CD4-positive, alpha-beta memory T cell (primary cell): ENCODE measurements at regions of chr3 and their contacts with region 1.

Region 1: GRCh38 chr3:185659942-185660921 is 74.1 kb downstream of the SENP2 start:
- DNase-seq: peak; percentile 43 to 56 (median 52)
- H3K4me3 ChIP-seq: no peak overlapping the region
- H3K4me3 Mint-ChIP-seq: peak overlapping the region in 2 of 8 donors; percentile 17 to 22
- H3K27ac ChIP-seq: no peak overlapping the region
- H3K27ac Mint-ChIP-seq: no peak overlapping the region
- H3K4me1 ChIP-seq: no peaks in the 10 kb centered on the region
- H3K4me1 Mint-ChIP-seq: peaks cover 0 to 1% (median 0%) of the 10 kb centered on the region in 4 donors
- H3K27me3 ChIP-seq: no peaks in the 10 kb centered on the region
- H3K27me3 Mint-ChIP-seq: peaks cover 13 to 15% of the 10 kb centered on the region in 2 donors

Region 2: GRCh38 chr3:185646382-185647133 is 13.7 kb before region 1 on chr3:
- CTCF ChIA-PET with region 1: interaction called, 54 read pairs
- POLR2A ChIA-PET with region 1: no interaction called
- intact Hi-C with region 1: no loop called
- DNase-seq: no peak
- H3K4me3 ChIP-seq: no peak overlapping the region
- H3K4me3 Mint-ChIP-seq: no peak overlapping the region
- H3K27ac ChIP-seq: no peak overlapping the region
- H3K27ac Mint-ChIP-seq: peak overlapping the region in 1 of 7 donors; percentile 23
- H3K4me1 ChIP-seq: no peaks in the 10 kb centered on the region
- H3K4me1 Mint-ChIP-seq: peaks cover 0 to 2% (median under 1%) of the 10 kb centered on the region in 4 donors
- H3K27me3 ChIP-seq: no peaks in the 10 kb centered on the region
- H3K27me3 Mint-ChIP-seq: peaks cover 12 to 14% of the 10 kb centered on the region in 2 donors

Region 3: DNA sequence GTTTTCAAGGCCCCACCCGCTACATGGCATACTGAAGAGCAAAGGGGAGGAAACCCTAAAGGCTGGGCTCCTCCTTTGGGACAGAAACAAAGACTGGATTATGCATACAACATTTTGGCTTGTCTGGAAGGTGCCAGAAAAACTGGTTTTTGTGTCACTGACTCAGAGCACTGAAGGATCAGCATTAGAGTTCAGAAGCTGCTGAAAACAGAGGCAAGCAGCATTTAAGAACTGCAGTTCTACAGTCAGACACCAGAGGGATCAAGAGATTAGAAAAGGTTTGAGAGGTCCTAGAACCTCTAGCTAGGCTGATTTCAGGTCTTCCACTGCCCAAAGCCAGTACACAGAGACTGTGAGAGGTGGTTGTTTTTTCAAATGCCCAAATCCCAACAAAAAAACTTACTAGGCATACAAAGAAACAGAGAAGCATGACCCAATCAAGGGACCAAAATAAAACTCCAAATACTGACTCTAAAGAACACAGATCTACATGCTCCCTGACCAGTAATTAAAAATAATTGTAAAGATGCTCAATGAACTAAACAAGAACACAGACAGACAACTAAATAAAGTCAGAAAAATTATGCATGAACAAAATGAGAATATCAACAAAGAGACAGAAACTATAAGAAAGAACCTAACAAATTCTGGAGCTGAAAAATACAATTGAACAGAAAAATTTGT is 17.1 kb after region 1 on chr3:
- CTCF ChIA-PET with region 1: interaction called, 34 read pairs
- POLR2A ChIA-PET with region 1: no interaction called
- intact Hi-C with region 1: no loop called
- DNase-seq: no peak
- H3K4me3 ChIP-seq: no peak overlapping the region
- H3K4me3 Mint-ChIP-seq: no peak overlapping the region
- H3K27ac ChIP-seq: no peak overlapping the region
- H3K27ac Mint-ChIP-seq: no peak overlapping the region
- H3K4me1 ChIP-seq: no peaks in the 10 kb centered on the region
- H3K4me1 Mint-ChIP-seq: no peaks in the 10 kb centered on the region
- H3K27me3 ChIP-seq: peaks cover 4% of the 10 kb centered on the region
- H3K27me3 Mint-ChIP-seq: peaks cover 15 to 20% of the 10 kb centered on the region in 2 donors

Region 4: DNA sequence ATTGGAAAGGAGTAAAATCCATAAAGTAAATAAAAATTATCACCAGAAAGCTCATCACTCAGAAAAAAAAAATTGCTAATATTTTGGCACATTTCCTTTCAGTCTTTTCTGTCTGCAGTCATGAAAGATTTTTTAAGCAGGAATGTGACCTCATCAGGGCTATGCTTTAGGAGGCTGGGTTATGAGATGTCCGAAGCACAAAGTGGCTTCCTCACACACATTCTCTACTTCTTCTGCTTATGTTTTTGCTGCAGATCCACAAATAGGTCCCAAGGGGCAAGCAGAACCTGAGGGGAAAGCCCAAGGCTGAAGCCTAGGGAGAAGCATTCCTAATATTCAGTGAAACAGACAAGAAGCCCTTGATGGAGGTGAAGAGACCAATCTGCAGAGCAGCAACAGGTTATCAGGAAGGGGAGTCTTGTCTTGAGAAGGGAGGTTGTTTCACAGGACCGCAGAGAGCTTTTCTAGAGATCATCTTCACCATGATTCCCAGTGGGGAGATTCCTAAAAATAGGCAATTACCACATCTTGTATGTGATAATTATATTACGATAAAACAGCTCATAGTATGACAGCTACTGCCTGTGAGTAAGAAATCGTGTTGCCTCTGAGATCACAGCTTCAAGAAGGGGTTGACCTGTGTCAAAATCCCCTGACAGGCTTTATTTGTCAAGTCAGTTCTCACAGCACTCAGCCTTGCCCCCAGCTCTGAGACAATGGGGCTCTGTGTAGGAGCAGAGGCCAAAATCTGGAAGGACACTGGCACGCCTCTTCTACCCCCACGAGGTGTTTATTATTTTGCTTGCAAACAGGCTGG is 104.1 kb after region 1 on chr3:
- CTCF ChIA-PET with region 1: interaction called, 10 read pairs
- POLR2A ChIA-PET with region 1: no interaction called
- intact Hi-C with region 1: loop called (anchors 1 kb)
- DNase-seq: no peak
- H3K4me3 ChIP-seq: no peak overlapping the region
- H3K4me3 Mint-ChIP-seq: no peak overlapping the region
- H3K27ac ChIP-seq: no peak overlapping the region
- H3K27ac Mint-ChIP-seq: no peak overlapping the region
- H3K4me1 ChIP-seq: no peaks in the 10 kb centered on the region
- H3K4me1 Mint-ChIP-seq: no peaks in the 10 kb centered on the region
- H3K27me3 ChIP-seq: peaks cover 7% of the 10 kb centered on the region
- H3K27me3 Mint-ChIP-seq: peaks cover 22 to 37% of the 10 kb centered on the region in 2 donors